Activated CD4-positive, alpha-beta T cell treated with anti-CD3 and anti-CD28 coated beads, Interleukin-2, amount 10 ng/mL, durations not matched to agents 24 days and 14 days (primary cell): ENCODE measurements at regions of chr9 and their contacts with region 1.

Region 1: DNA sequence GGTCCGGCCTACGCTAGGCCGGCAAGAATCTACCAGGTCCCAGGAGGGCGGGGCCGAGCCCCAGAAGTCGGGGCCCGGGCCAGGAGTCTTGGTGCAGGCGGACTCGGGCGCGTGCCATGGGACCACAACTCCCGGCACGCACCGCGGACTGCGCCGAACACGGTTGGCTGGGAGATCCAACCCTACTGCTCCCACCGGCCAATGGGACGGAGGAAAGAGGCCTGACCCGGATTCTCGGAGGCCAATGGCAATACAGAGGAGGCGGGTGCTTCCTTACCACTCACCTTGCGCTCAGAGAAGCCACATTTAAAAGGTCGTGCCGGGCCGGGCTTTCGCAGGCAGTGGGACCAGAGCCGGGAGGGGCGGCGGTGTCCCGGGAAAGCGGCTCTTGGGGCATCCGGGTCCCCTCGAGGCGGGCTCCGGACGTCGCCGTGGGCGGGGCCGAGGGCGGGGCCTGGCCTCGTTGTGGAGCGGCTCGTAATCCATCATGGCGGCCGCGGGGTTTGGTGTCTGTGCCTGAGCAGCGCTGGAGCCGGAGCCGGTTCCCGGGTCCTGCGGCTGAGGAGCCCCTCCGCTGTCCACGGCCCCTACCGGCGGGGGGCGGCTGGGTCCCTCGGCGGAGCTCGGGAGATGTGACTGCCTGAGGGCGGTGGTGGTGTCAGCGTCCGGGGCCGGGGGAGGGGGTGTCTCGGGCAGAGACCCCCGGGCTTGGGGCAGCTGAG is 19.1 kb downstream of the EXOSC2 start:
- DNase-seq: peak; percentile 98
- H3K4me3 Mint-ChIP-seq: peak overlapping the region; percentile 96
- H3K27ac Mint-ChIP-seq: peak overlapping the region; percentile 94
- H3K4me1 Mint-ChIP-seq: peaks cover 25% of the 10 kb centered on the region
- H3K27me3 Mint-ChIP-seq: no peaks in the 10 kb centered on the region

Region 2: DNA sequence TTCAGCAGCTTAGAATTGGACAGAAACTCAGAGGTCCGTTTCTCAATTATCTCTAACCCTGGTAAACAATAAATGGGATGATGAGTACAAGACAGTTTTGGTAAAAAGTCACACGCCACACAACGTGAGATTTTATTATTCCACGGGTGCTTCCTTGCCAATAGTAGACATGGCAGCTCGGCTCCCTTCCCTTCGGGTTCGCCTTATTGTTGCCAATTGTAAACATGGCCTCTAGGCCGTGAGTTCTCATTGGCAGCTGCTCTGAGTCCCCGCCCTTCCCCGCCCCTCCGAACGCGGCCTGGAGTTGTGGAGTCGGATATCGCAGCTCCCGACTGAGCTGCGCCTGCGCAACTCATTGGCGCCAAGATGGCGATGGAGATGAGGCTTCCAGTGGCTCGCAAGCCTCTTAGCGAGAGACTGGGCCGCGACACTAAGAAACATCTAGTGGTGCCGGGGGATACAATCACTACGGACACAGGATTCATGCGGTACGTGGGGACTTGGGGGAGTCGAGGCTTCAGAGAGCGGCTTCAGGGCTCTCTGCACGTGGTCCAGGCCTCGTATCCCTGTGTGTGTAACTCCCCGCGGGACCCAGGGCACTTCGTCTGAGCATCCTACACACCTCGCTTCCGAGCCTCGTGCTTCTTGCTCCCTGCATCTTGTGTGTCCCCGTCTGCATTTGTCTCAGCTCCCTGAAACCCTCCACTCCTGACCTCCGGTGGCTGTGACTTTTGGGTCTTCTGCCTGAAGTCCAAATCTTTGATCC is 19.1 kb before region 1 on chr9 and contains the start of gene EXOSC2:
- intact Hi-C with region 1: loop called (anchors 1 kb)
- DNase-seq: peak; percentile 97
- H3K4me3 Mint-ChIP-seq: peak within 1 kb of the TSS; percentile 89
- H3K27ac Mint-ChIP-seq: peak within 1 kb of the TSS; percentile 93
- H3K4me1 Mint-ChIP-seq: peaks cover 37% of the 10 kb centered on the region
- H3K27me3 Mint-ChIP-seq: no peaks in the 10 kb centered on the region
- total RNA-seq, gene EXOSC2: 109 and 110 TPM in 2 replicates

Region 3: GRCh38 chr9:130741831-130742449 is 29.2 kb after region 1 on chr9:
- intact Hi-C with region 1: no loop called
- DNase-seq: no peak
- H3K4me3 Mint-ChIP-seq: no peak overlapping the region
- H3K27ac Mint-ChIP-seq: no peak overlapping the region
- H3K4me1 Mint-ChIP-seq: no peaks in the 10 kb centered on the region
- H3K27me3 Mint-ChIP-seq: no peaks in the 10 kb centered on the region

Region 4: GRCh38 chr9:130770679-130771442 is 58.1 kb after region 1 on chr9:
- intact Hi-C with region 1: loop called (anchors 5 kb)
- DNase-seq: peak; percentile 63
- H3K4me3 Mint-ChIP-seq: no peak overlapping the region
- H3K27ac Mint-ChIP-seq: no peak overlapping the region
- H3K4me1 Mint-ChIP-seq: peaks cover 10% of the 10 kb centered on the region
- H3K27me3 Mint-ChIP-seq: no peaks in the 10 kb centered on the region

Region 5: DNA sequence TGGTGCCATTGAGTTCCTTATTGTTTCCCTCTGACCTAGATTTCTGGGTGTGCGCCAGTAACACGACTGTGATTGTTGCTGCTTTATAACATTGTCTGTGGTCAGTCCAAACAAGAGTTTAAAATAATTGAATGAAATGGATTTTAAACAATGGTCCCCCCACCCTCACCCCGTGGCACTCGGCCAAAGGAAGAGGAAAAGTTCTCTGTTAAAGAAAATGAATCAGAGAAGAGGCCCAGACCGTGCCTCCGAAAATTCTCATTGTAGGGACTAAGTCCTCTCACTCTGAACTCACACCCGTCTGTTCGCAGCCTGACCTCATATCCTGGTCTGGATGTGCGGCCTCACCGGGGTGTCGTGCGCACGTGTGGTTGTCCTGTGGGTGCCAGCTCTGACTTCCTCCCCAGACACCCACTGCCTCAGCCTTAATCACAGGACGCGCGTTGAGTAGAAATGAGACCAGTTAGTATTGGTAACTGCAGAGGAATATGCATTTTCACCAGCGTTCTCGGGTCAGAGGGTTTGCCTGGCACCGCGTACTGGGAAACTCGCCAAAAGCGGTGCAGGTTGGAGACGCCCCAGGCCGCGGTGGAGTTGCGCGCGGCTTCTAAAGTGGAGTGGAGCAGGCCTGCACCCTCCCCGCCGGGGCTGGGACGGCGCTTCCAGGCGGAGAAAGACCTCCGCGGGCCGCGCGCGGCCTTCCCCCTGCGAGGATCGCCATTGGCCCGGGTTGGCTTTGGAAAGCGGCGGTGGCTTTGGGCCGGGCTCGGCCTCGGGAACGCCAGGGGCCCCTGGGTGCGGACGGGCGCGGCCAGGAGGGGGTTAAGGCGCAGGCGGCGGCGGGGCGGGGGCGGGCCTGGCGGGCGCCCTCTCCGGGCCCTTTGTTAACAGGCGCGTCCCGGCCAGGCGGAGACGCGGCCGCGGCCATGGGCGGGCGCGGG is 121.9 kb after region 1 on chr9 and contains the start of gene ABL1:
- intact Hi-C with region 1: loop called (anchors 10 kb)
- DNase-seq: peak; percentile 82
- H3K4me3 Mint-ChIP-seq: peak within 1 kb of the TSS; percentile 96
- H3K27ac Mint-ChIP-seq: peak within 1 kb of the TSS; percentile 96
- H3K4me1 Mint-ChIP-seq: peaks cover 15% of the 10 kb centered on the region
- H3K27me3 Mint-ChIP-seq: peaks cover 13% of the 10 kb centered on the region
- total RNA-seq, gene ABL1: 32.6 and 35.7 TPM in 2 replicates

Region 6: DNA sequence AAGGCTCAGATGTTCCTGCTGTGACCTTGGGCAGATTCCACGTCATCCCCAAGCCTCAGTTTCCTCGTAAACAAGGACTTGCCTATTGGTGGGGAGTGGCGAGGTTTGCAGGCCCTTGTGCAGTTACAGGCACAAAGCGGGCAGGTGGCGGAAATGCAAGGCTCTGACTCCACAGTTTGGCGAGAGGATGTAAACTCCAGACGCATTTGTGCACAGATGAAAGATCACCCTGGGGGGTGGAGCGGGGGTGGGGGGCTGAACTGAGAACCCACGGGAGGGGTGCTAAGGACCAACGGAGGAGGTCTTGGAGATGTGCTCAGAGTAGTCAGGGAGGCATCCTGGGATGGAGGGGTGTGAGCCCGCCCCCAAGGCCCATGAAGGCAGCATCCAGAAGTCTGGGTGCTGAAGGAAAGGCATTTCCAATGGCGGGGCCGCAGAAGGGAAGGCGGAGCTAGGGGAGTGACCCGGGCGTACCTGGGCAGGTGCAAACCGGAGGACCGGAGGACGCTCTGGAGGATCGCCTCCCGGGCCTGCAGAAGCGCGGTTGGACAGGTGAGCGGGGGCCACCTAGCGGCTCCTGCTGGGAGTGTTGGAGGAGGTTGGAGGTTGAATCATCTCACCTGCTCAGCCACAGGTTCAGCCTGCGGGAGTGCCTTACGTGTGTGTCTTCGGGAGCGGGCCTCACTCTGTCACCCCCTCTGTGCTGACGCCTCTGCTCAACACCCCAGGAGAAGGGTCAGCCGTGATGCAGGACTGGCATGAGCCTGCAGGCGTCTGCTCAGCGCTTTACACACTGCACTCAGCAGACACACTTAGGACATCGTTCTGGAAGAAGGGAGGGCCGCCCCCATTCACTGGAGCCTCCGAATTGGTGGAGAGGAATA is 228.2 kb after region 1 on chr9:
- intact Hi-C with region 1: loop called (anchors 5 kb)
- DNase-seq: peak; percentile 92
- H3K4me3 Mint-ChIP-seq: no peak overlapping the region
- H3K27ac Mint-ChIP-seq: no peak overlapping the region
- H3K4me1 Mint-ChIP-seq: peaks cover 6% of the 10 kb centered on the region
- H3K27me3 Mint-ChIP-seq: peaks cover 38% of the 10 kb centered on the region

Region 7: GRCh38 chr9:131076347-131077195 is 363.8 kb after region 1 on chr9:
- intact Hi-C with region 1: no loop called
- DNase-seq: no peak
- H3K4me3 Mint-ChIP-seq: no peak overlapping the region
- H3K27ac Mint-ChIP-seq: no peak overlapping the region
- H3K4me1 Mint-ChIP-seq: no peaks in the 10 kb centered on the region
- H3K27me3 Mint-ChIP-seq: no peaks in the 10 kb centered on the region